ENCODE measurements at regions of chr12 and their contacts with region 1.

Region 1: GRCh38 chr12:46124848-46125619 is 134.7 kb upstream of the SCAF11 start:
- DNase-seq: peak; percentile 80
- ATAC-seq: peak; percentile 91
- H3K4me3 ChIP-seq: peak overlapping the region; percentile 66
- H3K27ac ChIP-seq: no peak overlapping the region
- H3K4me1 ChIP-seq: peaks cover 20% of the 10 kb centered on the region
- H3K27me3 ChIP-seq: no peaks in the 10 kb centered on the region
- CTCF ChIP-seq: peak; percentile 71

Region 2: DNA sequence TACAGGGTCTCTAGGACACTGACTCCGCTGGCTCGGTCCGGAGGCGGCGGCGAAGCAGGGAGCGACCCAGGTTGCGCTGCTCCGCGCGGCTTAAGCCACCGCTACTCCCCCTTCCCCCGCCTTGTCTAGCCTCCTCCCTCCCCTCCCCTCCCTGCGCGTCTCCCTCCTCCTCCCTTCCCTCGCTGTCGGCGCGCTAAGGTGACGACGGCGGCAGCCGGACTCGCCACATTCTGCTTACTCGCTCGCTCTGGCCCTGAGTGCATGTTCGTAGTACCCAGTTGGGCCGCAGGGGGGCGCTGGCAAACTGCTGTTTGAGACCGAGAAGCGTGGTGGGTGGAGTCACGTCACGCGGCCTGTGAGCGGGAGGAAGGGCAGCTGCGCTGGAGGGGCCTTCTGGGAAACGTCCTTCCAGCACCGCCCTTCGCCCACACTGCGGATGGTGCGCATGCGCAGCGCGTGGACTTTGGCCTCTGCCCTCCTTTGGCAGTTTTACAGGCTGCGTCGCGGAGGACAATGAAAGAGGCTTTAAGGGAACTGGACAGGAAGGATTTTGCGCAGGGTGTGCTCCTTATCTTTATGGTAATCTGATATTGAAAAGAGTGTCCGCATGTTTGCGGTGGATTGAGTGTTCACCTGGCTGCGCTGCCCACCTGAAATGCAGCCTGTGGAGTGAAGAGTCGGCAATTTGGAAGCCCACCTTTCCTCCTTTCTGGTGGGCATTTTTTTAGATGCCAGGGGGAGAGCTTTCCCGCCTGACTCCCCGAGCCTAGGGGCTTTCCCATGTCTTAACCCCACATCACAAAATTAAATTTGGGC is 134.4 kb before region 1 on chr12 and contains the start of gene SCAF11:
- CTCF ChIA-PET with region 1: interaction called, 3 read pairs
- POLR2A ChIA-PET with region 1: no interaction called
- intact Hi-C with region 1: loop called (anchors 10 kb)
- DNase-seq: peak; percentile 100
- ATAC-seq: peak; percentile 70
- H3K4me3 ChIP-seq: peak within 1 kb of the TSS; percentile 83
- H3K27ac ChIP-seq: peak within 1 kb of the TSS; percentile 95
- H3K4me1 ChIP-seq: peaks cover 21% of the 10 kb centered on the region
- H3K27me3 ChIP-seq: no peaks in the 10 kb centered on the region
- CTCF ChIP-seq: peak; percentile 94
- total RNA-seq, gene SCAF11: 75.7 and 92.0 TPM in 2 replicates

Region 3: GRCh38 chr12:46181465-46181864 is 56.4 kb after region 1 on chr12:
- CTCF ChIA-PET with region 1: no interaction called
- POLR2A ChIA-PET with region 1: interaction called, 27 read pairs
- intact Hi-C with region 1: no loop called
- DNase-seq: no peak
- ATAC-seq: no peak
- H3K4me3 ChIP-seq: no peak overlapping the region
- H3K27ac ChIP-seq: no peak overlapping the region
- H3K4me1 ChIP-seq: no peaks in the 10 kb centered on the region
- H3K27me3 ChIP-seq: no peaks in the 10 kb centered on the region
- CTCF ChIP-seq: no peak

Region 4: GRCh38 chr12:46187023-46187422 is 62.0 kb after region 1 on chr12:
- CTCF ChIA-PET with region 1: interaction called, 10 read pairs
- POLR2A ChIA-PET with region 1: no interaction called
- intact Hi-C with region 1: no loop called
- DNase-seq: peak; percentile 71
- ATAC-seq: peak; percentile 42
- H3K4me3 ChIP-seq: no peak overlapping the region
- H3K27ac ChIP-seq: no peak overlapping the region
- H3K4me1 ChIP-seq: no peaks in the 10 kb centered on the region
- H3K27me3 ChIP-seq: no peaks in the 10 kb centered on the region
- CTCF ChIP-seq: no peak

Region 5: DNA sequence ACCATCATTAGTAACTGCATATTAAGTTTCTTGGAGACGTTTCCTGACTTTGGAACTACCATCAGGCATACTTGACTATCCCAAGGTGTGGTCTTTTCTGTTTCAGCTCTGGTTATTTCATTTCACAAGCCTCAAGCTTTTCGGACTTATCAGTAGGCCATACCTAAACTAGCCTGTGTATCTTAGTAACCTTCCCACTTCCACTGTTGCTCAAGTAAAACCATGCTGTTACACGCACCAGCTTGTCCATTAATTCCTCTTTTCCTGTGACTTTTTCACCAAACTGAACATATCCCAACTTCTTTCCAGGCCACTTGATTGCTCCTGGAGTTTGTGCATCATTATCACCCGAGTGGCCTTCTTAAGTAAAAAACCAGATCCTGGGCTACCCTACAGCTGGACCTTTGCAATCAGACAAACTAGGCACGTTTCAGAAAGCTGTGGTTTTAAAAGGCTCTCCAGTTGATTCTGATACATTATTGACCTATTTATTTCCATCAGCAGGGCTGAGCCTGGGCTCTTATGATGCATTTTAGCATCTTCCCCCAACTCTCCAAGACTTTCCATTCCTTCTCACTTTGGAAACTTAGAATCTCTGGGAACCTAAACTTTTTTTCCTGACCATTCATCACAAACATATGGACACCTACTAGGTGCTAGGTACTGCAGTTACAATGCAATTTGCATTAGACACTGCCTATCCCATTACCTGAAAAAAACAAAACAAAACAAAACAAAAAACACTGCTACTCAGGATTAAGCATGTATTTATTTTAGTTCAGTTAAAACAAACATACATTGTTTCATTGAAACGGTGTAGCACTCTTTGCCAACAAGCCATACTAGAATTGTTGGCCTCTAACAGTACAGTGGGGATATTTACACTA is 232.6 kb after region 1 on chr12:
- CTCF ChIA-PET with region 1: interaction called, 5 read pairs
- POLR2A ChIA-PET with region 1: interaction called, 11 read pairs
- intact Hi-C with region 1: loop called (anchors 5 kb)
- DNase-seq: peak; percentile 39
- ATAC-seq: peak; percentile 46
- H3K4me3 ChIP-seq: no peak overlapping the region
- H3K27ac ChIP-seq: no peak overlapping the region
- H3K4me1 ChIP-seq: no peaks in the 10 kb centered on the region
- H3K27me3 ChIP-seq: no peaks in the 10 kb centered on the region
- CTCF ChIP-seq: no peak

Region 6: DNA sequence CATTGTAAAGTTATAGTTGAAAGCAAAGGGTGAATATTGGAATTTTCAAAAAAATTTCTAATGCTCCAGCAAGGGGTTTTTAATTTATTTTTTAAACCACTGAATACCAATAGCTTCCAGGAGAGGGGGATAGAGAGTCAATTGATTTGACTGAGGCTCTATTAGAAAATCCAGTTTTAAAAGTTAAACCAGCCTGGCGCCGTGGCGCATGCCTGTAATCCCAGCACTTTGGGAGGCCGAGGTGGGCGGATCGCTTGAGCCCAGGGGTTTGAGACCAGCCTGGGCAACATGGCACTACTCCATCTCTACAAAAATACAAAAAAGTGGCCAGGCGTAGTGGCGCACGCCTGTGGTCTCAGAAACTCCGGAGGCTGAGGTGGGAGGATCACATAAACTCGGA is 550.7 kb after region 1 on chr12:
- CTCF ChIA-PET with region 1: no interaction called
- POLR2A ChIA-PET with region 1: no interaction called
- intact Hi-C with region 1: loop called (anchors 5 kb)
- DNase-seq: peak; percentile 71
- ATAC-seq: no peak
- H3K4me3 ChIP-seq: no peak overlapping the region
- H3K27ac ChIP-seq: peak overlapping the region; percentile 68
- H3K4me1 ChIP-seq: peaks cover 44% of the 10 kb centered on the region
- H3K27me3 ChIP-seq: no peaks in the 10 kb centered on the region
- CTCF ChIP-seq: peak; percentile 65